Activated T-helper 1 cell treated with anti-CD3 and anti-CD28 coated beads, Interleukin-12 subunit alpha, Interleukin-12 subunit beta, Interleukin-2, Interleukin-4 antibody, amounts not matched to agents 30 ng/mL and 10 ng/mL and 1 ng/mL, durations not matched to agents 14 hours and 24 hours and 36 hours (primary cell): ENCODE measurements at regions of chr6 and their contacts with region 1.

Region 1: DNA sequence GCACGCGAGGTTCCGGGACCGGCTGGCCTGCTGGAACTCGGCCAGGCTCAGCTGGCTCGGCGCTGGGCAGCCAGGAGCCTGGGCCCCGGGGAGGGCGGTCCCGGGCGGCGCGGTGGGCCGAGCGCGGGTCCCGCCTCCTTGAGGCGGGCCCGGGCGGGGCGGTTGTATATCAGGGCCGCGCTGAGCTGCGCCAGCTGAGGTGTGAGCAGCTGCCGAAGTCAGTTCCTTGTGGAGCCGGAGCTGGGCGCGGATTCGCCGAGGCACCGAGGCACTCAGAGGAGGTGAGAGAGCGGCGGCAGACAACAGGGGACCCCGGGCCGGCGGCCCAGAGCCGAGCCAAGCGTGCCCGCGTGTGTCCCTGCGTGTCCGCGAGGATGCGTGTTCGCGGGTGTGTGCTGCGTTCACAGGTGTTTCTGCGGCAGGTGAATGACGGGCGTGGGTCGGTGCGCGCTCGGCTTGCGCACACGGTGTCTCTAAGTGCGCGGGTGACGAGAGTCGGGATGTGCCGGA is at the start of gene CDKN1A:
- DNase-seq: peak; percentile 80
- H3K4me3 Mint-ChIP-seq: peak within 1 kb of the TSS; percentile 97
- H3K27ac Mint-ChIP-seq: peak within 1 kb of the TSS; percentile 95
- H3K4me1 Mint-ChIP-seq: peaks cover 67% of the 10 kb centered on the region
- H3K27me3 Mint-ChIP-seq: peaks cover 4% of the 10 kb centered on the region
- total RNA-seq, gene CDKN1A: 105 and 107 TPM in 2 replicates

Region 2: DNA sequence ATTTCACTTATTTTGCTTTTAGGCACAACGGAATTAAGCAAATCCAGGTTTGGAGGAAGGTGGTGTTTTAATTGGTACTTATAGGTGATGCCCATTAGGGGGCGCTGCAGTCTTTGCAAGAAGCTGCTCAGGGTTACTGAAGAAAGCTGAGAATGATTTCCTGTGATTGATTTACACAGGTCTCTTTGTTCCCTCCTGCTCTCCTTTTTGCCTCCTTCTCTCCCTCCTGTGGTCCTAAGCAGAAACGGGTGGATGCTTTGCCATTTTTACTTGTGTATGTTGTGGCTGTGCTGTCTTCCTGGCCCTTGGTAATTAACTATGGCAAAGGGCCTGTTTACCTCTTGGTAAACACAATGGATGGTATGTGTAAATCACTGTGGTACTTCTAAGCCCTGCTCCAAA is 1691.7 kb before region 1 on chr6:
- intact Hi-C with region 1: no loop called
- DNase-seq: peak; percentile 37
- H3K4me3 Mint-ChIP-seq: no peak overlapping the region
- H3K27ac Mint-ChIP-seq: no peak overlapping the region
- H3K4me1 Mint-ChIP-seq: no peaks in the 10 kb centered on the region
- H3K27me3 Mint-ChIP-seq: no peaks in the 10 kb centered on the region

Region 3: GRCh38 chr6:36160147-36160760 is 518.3 kb before region 1 on chr6:
- intact Hi-C with region 1: no loop called
- DNase-seq: no peak
- H3K4me3 Mint-ChIP-seq: no peak overlapping the region
- H3K27ac Mint-ChIP-seq: no peak overlapping the region
- H3K4me1 Mint-ChIP-seq: no peaks in the 10 kb centered on the region
- H3K27me3 Mint-ChIP-seq: no peaks in the 10 kb centered on the region

Region 4: GRCh38 chr6:36196880-36197548 is 481.6 kb before region 1 on chr6:
- intact Hi-C with region 1: loop called (anchors 2 kb)
- DNase-seq: peak; percentile 99
- H3K4me3 Mint-ChIP-seq: peak overlapping the region; percentile 89
- H3K27ac Mint-ChIP-seq: peak overlapping the region; percentile 87
- H3K4me1 Mint-ChIP-seq: peaks cover 40% of the 10 kb centered on the region
- H3K27me3 Mint-ChIP-seq: peaks cover 3% of the 10 kb centered on the region

Region 5: DNA sequence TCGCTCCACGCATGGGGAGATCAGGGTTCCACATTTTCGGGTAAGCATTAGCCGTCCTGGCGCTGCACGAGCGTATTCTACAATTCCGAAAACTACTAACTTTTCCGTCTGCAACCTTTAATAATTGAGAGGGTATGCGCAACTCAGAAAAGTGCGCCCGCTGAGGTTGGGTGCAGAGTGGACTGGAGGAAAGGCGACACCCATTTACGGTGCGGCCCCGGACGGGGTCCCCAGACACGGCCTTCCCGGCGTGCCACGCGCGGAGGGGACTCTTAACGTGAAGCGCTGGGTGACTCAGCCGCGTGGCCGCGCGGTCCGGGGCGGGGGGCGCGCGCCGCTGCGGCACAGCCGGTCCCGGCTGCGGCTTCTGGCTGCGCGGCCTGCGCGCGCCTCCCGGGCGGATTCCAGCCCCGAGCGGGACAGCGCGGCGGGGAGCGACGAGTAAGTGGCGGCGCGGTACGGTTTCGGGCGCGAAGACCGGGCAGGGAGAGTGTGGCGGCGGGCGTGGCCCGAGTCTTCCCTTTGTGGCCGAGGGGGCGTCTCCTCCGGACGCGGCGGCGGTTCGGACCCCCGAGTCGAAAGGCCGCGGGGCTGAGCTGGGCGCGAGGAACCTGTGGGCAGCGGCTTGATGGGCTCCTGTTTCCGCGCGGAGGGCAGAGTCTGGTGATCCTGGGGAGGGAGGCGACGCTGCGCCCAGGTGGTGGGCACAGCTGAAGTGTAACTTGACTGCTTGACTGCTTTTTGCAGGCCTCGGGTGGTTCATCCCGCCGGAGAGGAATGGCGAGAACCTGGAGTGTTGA is 235.7 kb before region 1 on chr6 and contains the starts of genes KCTD20 and PXT1:
- intact Hi-C with region 1: loop called (anchors 1 kb)
- DNase-seq: peak; percentile 86
- H3K4me3 Mint-ChIP-seq: peak within 1 kb of the TSS; percentile 96
- H3K27ac Mint-ChIP-seq: peak within 1 kb of the TSS; percentile 95
- H3K4me1 Mint-ChIP-seq: peaks cover 48% of the 10 kb centered on the region
- H3K27me3 Mint-ChIP-seq: no peaks in the 10 kb centered on the region
- total RNA-seq, gene KCTD20: 62.4 and 62.8 TPM in 2 replicates
- total RNA-seq, gene PXT1: 0.16 and 0.29 TPM in 2 replicates

Region 6: GRCh38 chr6:36615018-36615761 is 63.4 kb before region 1 on chr6:
- intact Hi-C with region 1: loop called (anchors 2 kb)
- DNase-seq: peak; percentile 37
- H3K4me3 Mint-ChIP-seq: no peak overlapping the region
- H3K27ac Mint-ChIP-seq: no peak overlapping the region
- H3K4me1 Mint-ChIP-seq: peaks cover 12% of the 10 kb centered on the region
- H3K27me3 Mint-ChIP-seq: no peaks in the 10 kb centered on the region

Region 7: DNA sequence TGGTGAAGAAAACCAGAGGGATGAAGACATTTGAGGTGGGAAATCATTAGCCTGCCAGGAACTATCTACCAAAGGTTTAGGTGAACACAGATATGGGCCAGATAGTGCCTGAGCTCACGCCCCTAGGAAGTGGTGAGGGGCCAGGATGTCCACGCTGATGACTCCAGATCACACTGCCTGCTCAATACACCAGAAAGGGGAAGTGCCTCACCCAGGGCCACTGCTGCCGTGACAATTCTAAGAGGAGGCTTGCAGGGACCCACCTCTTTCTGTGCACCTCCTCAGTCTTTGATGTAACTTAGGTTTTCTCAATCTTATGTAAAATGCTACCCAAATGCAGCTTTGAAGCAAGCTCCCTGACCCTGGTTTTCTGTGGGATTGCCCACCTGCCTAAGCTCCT is 13.6 kb after region 1 on chr6:
- intact Hi-C with region 1: loop called (anchors 1 kb)
- DNase-seq: peak; percentile 48
- H3K4me3 Mint-ChIP-seq: no peak overlapping the region
- H3K27ac Mint-ChIP-seq: peak overlapping the region; percentile 66
- H3K4me1 Mint-ChIP-seq: peaks cover 66% of the 10 kb centered on the region
- H3K27me3 Mint-ChIP-seq: no peaks in the 10 kb centered on the region

Region 8: DNA sequence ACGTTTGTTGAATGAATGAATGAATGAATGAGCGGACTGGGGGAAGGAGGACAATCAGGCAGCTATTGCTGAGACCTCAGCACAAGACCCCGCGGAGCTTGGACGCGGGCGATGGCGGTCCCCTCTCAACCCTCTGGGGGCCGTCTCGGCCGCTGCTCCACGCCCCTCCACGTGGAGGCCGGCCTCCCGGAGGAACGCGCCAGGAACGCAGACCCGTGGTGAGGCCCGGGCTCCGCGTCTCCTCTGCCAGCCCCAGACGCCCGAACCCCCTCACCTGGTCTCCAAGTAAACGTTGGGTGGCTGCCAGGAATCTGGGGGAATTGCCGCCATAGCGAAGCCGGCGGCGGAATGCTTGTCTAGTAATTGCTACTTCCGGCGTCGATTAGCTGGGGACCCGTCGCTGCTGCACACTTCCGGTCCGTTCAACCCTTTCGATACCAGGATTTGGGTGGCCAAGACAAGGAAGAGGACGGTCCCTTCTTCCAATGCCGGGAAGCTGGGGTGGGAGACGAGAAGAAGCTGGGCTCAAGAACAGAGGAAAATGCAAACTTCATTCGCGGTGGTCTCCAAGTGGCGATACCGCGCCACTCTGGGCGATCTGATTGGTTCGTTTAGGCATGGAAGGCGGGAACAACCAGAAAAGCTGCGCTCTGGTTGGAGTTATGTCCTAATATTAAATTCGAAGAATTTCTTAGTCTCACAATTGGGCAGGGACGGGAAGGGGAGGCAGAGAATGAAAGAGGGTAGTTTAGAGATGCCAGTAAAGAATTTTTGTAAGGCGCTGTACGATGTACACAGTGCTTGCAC is 196.1 kb after region 1 on chr6 and contains the start of gene PPIL1:
- intact Hi-C with region 1: loop called (anchors 5 kb)
- DNase-seq: peak; percentile 75
- H3K4me3 Mint-ChIP-seq: peak within 1 kb of the TSS; percentile 93
- H3K27ac Mint-ChIP-seq: peak within 1 kb of the TSS; percentile 99
- H3K4me1 Mint-ChIP-seq: peaks cover 47% of the 10 kb centered on the region
- H3K27me3 Mint-ChIP-seq: peaks cover 2% of the 10 kb centered on the region
- total RNA-seq, gene PPIL1: 60.2 and 62.6 TPM in 2 replicates